ENCODE measurements at regions of chr10 and their contacts with region 1.

Region 1: DNA sequence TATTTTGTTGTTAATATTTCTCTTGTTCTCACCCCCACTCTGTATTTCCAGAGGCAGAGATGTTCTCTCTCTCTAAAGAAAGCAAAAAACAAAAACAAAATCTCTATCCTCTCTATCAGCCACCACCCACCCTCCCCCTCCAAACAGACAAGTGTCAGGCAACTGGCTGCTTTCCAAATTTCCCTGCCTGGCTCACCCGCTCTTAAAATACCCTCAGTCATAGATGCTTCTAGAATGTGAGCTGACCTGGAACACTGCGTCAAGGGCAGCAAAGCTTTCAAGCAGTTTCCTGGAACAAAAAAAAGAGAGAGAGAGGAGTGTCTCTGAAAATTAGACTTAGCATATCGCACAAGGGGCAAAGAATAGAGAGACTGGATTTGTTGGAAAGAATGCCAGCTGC is 341.0 kb upstream of the ZMIZ1 start:
- DNase-seq: no peak
- H3K4me3 ChIP-seq: no peak overlapping the region
- H3K27me3 ChIP-seq: peaks cover 28% of the 10 kb centered on the region
- CTCF ChIP-seq: no peak

Region 2: DNA sequence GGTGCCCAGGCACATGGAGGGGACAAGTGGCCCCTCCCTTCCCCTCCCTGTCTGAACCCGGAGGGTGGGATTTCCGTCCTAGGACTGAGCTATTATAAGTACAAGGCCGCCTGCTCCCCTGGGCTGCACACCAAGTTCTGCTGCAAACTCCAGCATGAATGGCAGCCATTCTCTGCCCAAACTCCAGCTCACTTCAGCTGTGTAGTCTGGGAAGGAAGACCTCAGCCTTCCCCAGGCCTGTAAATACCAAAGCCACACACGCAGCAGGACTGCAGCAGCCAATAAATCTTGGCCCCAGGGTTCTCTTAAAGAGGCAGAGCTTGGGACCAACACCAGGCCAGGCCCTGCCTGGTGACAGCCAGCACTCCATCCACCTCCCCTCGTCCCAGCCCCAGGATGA is 49.7 kb after region 1 on chr10:
- CTCF ChIA-PET with region 1: no interaction called
- POLR2A ChIA-PET with region 1: interaction called, 26 read pairs
- DNase-seq: peak; percentile 76
- H3K4me3 ChIP-seq: no peak overlapping the region
- H3K27me3 ChIP-seq: no peaks in the 10 kb centered on the region
- CTCF ChIP-seq: no peak

Measured in BJ (cell line).